ENCODE measurements at regions of chr5 and their contacts with region 1.

Region 1: GRCh38 chr5:81819556-81820317 is 68.8 kb upstream of the SSBP2 start:
- DNase-seq: no peak
- ATAC-seq: no peak
- H3K4me3 ChIP-seq: no peak overlapping the region
- H3K4me3 Mint-ChIP-seq: peak overlapping the region in 3 of 10 donors; percentile 15 to 39 (median 35)
- H3K27ac ChIP-seq: no peak overlapping the region
- H3K27ac Mint-ChIP-seq: peak overlapping the region in 8 of 9 donors; percentile 9 to 83 (median 46)
- H3K4me1 ChIP-seq: peaks cover 0 to 31% of the 10 kb centered on the region in 2 donors
- H3K4me1 Mint-ChIP-seq: peaks cover 30 to 63% (median 54%) of the 10 kb centered on the region in 7 donors
- H3K27me3 ChIP-seq: no peaks in the 10 kb centered on the region
- H3K27me3 Mint-ChIP-seq: peaks cover 0 to 3% (median 0%) of the 10 kb centered on the region in 5 donors

Region 2: DNA sequence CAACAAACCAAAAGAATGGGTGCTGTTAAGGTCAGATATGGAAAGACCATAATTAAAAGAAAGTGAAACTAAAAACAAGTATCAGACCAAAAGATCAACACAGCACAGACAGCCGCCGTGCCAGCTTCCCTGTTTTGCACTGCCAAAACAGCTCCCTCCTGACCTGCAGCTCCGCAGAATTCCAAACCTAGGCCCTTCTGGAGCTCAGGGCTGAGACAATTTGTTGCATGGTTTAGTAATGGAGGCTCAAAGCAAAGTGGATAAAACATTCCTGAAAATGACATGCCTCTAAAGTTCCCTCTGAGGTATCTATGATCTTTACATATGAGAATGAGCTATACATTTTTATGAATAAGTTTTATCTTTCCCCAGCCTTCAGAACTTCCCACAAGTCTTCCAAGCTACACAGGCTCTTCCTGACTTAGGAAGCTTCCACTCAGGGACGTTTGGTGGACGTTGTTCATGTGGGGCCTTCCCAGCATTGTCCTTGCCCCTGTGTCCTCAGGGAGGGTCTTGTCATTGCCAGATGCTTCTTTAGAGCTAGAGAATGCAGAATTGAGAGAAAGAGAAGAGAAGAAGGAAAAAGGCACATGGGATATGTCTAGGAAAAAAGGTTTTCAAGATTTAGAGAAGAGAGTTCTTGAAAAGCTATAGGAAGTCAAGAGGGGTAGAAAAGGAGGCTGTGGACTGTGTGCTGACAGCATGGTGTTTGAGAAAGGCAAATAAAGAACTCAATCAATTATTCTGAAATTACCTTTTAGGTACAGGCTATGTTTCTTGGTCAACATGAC is 40.4 kb before region 1 on chr5:
- CTCF ChIA-PET with region 1: no interaction called
- POLR2A ChIA-PET with region 1: interaction called, 3 read pairs
- intact Hi-C with region 1: loop called in 1 of 2 experiments (anchors 5 kb)
- DNase-seq: peak in 8 of 9 donors; percentile 14 to 48 (median 36)
- ATAC-seq: peak; percentile 74
- H3K4me3 ChIP-seq: peak overlapping the region; percentile 51
- H3K4me3 Mint-ChIP-seq: peak overlapping the region; percentile 82 to 92 (median 88)
- H3K27ac ChIP-seq: peak overlapping the region; percentile 70
- H3K27ac Mint-ChIP-seq: peak overlapping the region; percentile 94 to 100 (median 95)
- H3K4me1 ChIP-seq: peaks cover 5 to 9% of the 10 kb centered on the region in 2 donors
- H3K4me1 Mint-ChIP-seq: peaks cover 9 to 35% (median 29%) of the 10 kb centered on the region in 7 donors
- H3K27me3 ChIP-seq: no peaks in the 10 kb centered on the region
- H3K27me3 Mint-ChIP-seq: no peaks in the 10 kb centered on the region

Region 3: DNA sequence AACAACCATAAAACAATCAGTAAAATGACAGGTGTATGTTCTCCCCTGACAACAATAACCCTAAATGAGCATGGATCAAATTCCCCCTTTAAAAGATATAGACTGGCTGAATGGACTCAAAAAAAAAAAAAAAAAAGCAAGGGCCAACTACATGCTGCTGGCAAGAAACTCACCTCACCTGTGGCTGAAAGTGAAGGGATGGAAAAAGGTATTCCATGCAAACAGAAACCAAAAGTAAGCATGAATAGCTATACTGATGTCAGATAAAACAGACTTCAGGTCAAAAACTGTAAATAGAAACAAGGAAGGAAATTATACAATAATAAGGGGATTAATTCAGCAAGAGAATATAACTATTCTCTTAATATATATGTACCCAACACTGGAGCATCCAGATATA is 14.7 kb before region 1 on chr5:
- CTCF ChIA-PET with region 1: no interaction called
- POLR2A ChIA-PET with region 1: no interaction called
- intact Hi-C with region 1: loop called in 1 of 2 experiments (anchors 1 kb)
- DNase-seq: peak in 1 of 9 donors; percentile 16
- ATAC-seq: no peak
- H3K4me3 ChIP-seq: no peak overlapping the region
- H3K4me3 Mint-ChIP-seq: peak overlapping the region in 2 of 10 donors; percentile 2 to 24
- H3K27ac ChIP-seq: no peak overlapping the region
- H3K27ac Mint-ChIP-seq: peak overlapping the region in 1 of 9 donors; percentile 11
- H3K4me1 ChIP-seq: no peaks in the 10 kb centered on the region
- H3K4me1 Mint-ChIP-seq: peaks cover 7 to 13% (median 10%) of the 10 kb centered on the region in 7 donors
- H3K27me3 ChIP-seq: no peaks in the 10 kb centered on the region
- H3K27me3 Mint-ChIP-seq: peaks cover 0 to 12% (median 0%) of the 10 kb centered on the region in 5 donors